ENCODE measurements at regions of chr22 and their contacts with region 1.

Region 1: GRCh38 chr22:19109198-19110067 is 12.8 kb downstream of the DGCR2 start:
- DNase-seq: peak in 3 of 4 experiments; percentile 57 to 95 (median 95)
- ATAC-seq: peak; percentile 89
- H3K4me3 ChIP-seq: peak overlapping the region; percentile 14
- H3K27ac ChIP-seq: peak overlapping the region; percentile 47
- H3K4me1 ChIP-seq: peaks cover 38 to 44% of the 10 kb centered on the region in 2 experiments
- H3K27me3 ChIP-seq: no peaks in the 10 kb centered on the region
- CTCF ChIP-seq: no peak
- EP300 ChIP-seq: peak; percentile 96
- POLR2A ChIP-seq: no peak
- RAD21 ChIP-seq: peak; percentile 16 to 23; a peak in 2 of 4 replicates

Region 2: DNA sequence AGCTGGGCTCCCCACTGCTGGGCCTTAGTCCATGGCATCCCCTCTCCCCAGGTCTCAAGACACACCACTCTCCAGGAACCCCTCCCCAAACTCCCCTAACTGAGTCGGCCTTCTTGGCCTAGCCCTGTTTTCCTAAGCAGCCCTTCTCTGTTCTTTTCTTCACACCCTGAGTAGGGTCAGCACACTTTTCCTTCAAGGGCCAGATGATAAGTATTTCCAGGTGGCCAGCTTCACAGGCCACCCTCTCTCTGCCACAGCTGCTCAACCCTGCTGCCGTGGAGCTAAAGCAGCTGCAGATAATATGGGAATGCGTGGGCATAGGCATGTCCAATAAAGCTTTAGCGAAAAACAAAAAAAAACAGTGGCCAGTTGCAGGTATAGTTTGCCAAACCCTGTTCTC is 11.3 kb before region 1 on chr22:
- CTCF ChIA-PET with region 1: no interaction called
- POLR2A ChIA-PET with region 1: interaction called, 67 read pairs
- in situ Hi-C with region 1: no loop called
- intact Hi-C with region 1: no loop called
- DNase-seq: peak in 2 of 4 experiments; percentile 44 to 46
- ATAC-seq: peak; percentile 7; the same call in 1 of the 3 replicates
- H3K4me3 ChIP-seq: no peak overlapping the region
- H3K27ac ChIP-seq: no peak overlapping the region
- H3K4me1 ChIP-seq: no peaks in the 10 kb centered on the region
- H3K27me3 ChIP-seq: no peaks in the 10 kb centered on the region
- CTCF ChIP-seq: no peak
- EP300 ChIP-seq: no peak
- POLR2A ChIP-seq: no peak
- RAD21 ChIP-seq: no peak

Region 3: DNA sequence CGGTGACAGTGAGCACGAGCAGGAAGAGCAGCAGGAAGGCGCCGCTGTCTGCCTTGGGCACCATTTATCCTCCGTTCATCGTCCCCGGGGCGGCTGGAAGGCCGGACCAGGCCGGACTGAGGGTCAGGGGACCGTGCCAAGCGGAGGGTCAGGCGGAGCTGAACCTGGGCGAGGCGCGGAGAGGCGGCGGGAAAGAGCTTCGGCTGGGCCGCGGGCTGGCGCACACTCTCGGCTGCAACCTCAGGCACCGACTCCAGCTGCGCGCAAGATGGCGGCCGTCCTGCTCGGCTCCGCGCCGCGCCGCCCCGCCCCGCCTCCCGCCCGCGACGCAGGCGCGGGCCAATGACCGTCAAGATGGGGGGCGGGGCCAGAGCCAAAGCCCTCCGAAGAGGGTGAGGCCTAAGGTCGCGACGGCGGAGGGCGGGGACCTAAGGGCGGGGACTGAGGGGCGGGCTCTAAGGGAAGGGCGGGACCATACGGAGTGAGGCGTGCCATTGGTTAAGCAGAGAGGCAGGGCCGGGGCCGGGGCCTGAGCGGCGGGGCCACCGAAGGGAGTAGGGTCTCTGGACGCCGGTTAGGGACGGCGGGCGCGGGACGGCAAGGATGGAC is 12.8 kb after region 1 on chr22 and contains the start of gene DGCR2:
- CTCF ChIA-PET with region 1: no interaction called
- POLR2A ChIA-PET with region 1: interaction called, 67 read pairs
- in situ Hi-C with region 1: no loop called
- intact Hi-C with region 1: loop called (anchors 1 kb)
- DNase-seq: peak; percentile 100
- ATAC-seq: peak; percentile 96
- H3K4me3 ChIP-seq: peak within 1 kb of the TSS; percentile 77
- H3K27ac ChIP-seq: peak within 1 kb of the TSS; percentile 77
- H3K4me1 ChIP-seq: peaks cover 30 to 52% of the 10 kb centered on the region in 2 experiments
- H3K27me3 ChIP-seq: peaks cover 18 to 26% of the 10 kb centered on the region in 2 experiments; a peak in 4 of 5 replicates
- CTCF ChIP-seq: no peak; a peak in 1 of 6 replicates
- EP300 ChIP-seq: 0 out of 2 replicates have a peak, but pooled peaks have one; percentile 3
- POLR2A ChIP-seq: peak; percentile 98
- RAD21 ChIP-seq: no peak
- polyA plus RNA-seq, gene DGCR2: 0.69 to 0.70 TPM

Region 4: DNA sequence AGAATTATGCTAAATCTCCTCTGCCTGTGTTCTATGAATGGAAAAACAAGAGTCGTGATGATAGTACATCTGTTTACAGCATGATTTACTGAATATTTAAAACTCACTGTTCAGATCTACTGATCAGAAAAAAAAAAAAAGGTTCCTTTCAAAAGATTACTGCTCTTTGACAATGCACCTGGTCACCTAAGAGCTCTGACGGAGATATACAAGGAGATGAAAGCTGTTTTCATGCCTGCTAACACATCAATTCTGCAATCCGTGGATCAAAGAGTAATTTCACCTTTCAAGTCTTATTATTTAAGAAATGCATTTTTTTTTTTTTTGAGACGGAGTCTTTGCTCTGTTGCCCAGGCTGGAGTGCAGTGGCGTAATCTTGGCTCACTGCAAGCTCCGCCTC is 151.4 kb after region 1 on chr22:
- CTCF ChIA-PET with region 1: no interaction called
- POLR2A ChIA-PET with region 1: no interaction called
- in situ Hi-C with region 1: no loop called
- intact Hi-C with region 1: loop called (anchors 1 kb)
- DNase-seq: no peak
- ATAC-seq: no peak
- H3K4me3 ChIP-seq: no peak overlapping the region
- H3K27ac ChIP-seq: no peak overlapping the region
- H3K4me1 ChIP-seq: peaks cover 0 to 9% of the 10 kb centered on the region in 2 experiments; a peak in 1 of 5 replicates
- H3K27me3 ChIP-seq: no peaks in the 10 kb centered on the region
- CTCF ChIP-seq: no peak
- EP300 ChIP-seq: no peak
- POLR2A ChIP-seq: no peak
- RAD21 ChIP-seq: no peak